ENCODE measurements at regions of chr16 and their contacts with region 1.

Region 1: GRCh38 chr16:77169650-77170236 is 21.2 kb upstream of the MON1B start:
- DNase-seq: no peak
- H3K4me3 ChIP-seq: no peak overlapping the region
- H3K27ac ChIP-seq: no peak overlapping the region
- H3K4me1 ChIP-seq: no peaks in the 10 kb centered on the region
- H3K27me3 ChIP-seq: no peaks in the 10 kb centered on the region
- CTCF ChIP-seq: peak in 1 of 3 donors; percentile 52
- POLR2A ChIP-seq: no peak

Region 2: GRCh38 chr16:75794426-75794825 is 1375.3 kb before region 1 on chr16:
- intact Hi-C with region 1: loop called (anchors 10 kb)
- DNase-seq: no peak
- H3K4me3 ChIP-seq: no peak overlapping the region
- H3K27ac ChIP-seq: no peak overlapping the region
- H3K4me1 ChIP-seq: no peaks in the 10 kb centered on the region
- H3K27me3 ChIP-seq: no peaks in the 10 kb centered on the region
- CTCF ChIP-seq: no peak
- POLR2A ChIP-seq: no peak

Region 3: GRCh38 chr16:77877712-77878347 is 708.1 kb after region 1 on chr16:
- intact Hi-C with region 1: no loop called
- DNase-seq: no peak
- H3K4me3 ChIP-seq: no peak overlapping the region
- H3K27ac ChIP-seq: no peak overlapping the region
- H3K4me1 ChIP-seq: no peaks in the 10 kb centered on the region
- H3K27me3 ChIP-seq: no peaks in the 10 kb centered on the region
- CTCF ChIP-seq: no peak
- POLR2A ChIP-seq: no peak

Measured in breast epithelium (tissue), 4 donors.